ENCODE measurements at regions of chr15 and their contacts with region 1.

Region 1: DNA sequence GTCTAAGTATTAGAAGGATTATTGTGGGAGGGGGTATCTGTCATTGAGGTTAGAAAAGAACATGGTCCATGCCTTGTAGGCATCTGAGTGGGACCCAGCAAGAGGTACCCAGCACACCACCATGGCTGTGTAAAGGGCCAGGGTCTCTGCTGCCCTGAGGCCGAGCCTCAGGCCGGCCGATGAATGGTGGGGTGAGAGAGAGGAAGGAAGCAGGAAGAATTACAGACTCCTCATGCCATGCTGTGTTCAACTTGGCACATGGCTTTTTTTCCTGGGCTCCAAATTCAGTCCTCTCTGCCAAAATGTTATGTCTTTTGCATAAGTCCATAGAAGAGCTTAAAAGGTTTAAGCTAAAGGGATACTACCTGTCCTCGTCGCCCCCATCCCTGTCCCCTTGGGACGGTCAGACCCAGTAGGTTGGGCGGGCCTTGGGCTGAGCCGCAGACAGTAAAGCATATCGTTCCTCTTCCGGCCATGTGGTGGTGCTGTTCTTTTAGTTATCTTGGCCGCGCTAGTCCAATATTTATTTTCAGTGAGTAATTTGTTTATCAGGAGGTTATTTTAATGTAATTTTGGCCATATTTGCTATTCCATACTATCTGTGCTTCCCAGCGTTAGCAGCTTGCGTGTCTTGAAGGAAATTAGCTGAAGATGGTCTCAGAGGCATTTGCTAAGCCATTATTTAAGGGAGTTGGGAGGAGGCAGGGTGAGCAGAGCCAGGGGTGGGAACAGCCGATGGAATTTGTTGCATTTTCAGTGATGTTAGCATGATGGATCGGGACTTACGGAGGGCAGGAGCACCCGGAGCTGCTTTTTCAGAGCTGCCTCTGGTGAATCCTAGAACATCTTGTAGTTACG is 152.4 kb downstream of the AGBL1 start:
- DNase-seq: peak; percentile 67
- ATAC-seq: peak; percentile 78
- H3K4me3 Mint-ChIP-seq: peak overlapping the region; percentile 55
- H3K27ac Mint-ChIP-seq: no peak overlapping the region
- H3K4me1 Mint-ChIP-seq: peaks cover 55% of the 10 kb centered on the region
- H3K27me3 Mint-ChIP-seq: no peaks in the 10 kb centered on the region; the same call in 1 of the 2 replicates
- CTCF ChIP-seq: peak; percentile 53

Region 2: DNA sequence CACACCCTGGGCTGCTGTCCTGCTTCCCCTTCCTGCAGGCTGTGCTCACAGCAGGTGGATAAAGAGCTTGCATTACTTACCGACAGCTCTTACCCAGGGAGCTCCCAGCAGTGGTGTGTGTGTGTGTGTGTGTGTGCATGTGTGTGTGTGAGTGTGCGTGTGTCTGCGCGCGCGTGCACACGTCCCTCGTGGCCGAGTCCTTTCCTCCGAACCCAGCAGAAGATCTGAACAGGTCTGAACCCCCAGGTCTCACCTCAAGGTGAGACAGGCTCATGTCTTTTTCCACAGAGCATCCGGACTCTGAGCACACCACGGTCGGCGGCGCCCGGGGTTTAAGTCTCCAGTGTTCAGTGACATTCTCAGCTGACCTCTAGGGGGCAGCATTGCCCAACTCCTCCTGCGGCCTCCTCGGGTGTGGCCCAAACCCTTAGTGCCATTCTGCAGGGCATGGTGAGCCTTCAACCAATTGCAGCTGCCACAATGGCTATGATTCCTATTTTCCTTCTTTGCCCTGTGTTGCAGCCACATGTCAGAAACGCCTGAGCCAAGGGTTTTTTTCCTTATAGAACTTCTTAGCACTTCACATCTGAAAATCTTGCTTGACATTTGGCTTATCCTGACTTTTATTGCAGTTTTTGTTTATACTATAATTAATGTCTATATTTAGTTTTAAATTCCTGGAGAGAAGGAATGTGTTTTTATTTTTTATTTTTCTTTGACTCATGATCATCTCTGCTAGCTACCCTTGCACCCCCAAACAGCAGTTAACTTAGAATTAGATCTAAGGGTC is 373.3 kb before region 1 on chr15:
- CTCF ChIA-PET with region 1: interaction called, 11 read pairs
- POLR2A ChIA-PET with region 1: no interaction called
- DNase-seq: peak; percentile 85
- ATAC-seq: peak; percentile 90
- H3K4me3 Mint-ChIP-seq: peak overlapping the region; percentile 67
- H3K27ac Mint-ChIP-seq: no peak overlapping the region
- H3K4me1 Mint-ChIP-seq: peaks cover 25% of the 10 kb centered on the region
- H3K27me3 Mint-ChIP-seq: no peaks in the 10 kb centered on the region; the same call in 1 of the 2 replicates
- CTCF ChIP-seq: peak; percentile 84

Region 3: DNA sequence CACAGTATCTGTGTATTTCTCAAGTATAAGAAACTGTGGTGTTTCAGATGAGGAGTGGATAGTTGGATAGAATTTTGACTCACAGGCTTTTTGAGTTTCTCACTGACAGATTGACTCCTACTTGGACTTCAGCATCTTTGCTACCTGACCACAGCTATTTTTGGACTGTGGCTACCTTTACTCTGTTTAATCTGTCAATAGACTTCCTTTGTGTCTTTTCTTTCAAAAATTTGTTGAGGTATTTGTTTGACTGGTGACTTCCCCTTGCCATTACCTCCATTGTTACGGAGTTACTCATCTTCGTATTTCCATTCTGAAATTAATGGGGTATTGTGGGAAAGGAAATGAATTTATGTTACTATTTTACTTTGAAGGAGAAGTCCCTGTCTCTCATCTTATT is 28.6 kb before region 1 on chr15:
- CTCF ChIA-PET with region 1: no interaction called
- POLR2A ChIA-PET with region 1: no interaction called
- DNase-seq: no peak
- ATAC-seq: no peak
- H3K4me3 Mint-ChIP-seq: no peak overlapping the region
- H3K27ac Mint-ChIP-seq: no peak overlapping the region
- H3K4me1 Mint-ChIP-seq: peaks cover 44% of the 10 kb centered on the region
- H3K27me3 Mint-ChIP-seq: no peaks in the 10 kb centered on the region
- CTCF ChIP-seq: no peak

Region 4: DNA sequence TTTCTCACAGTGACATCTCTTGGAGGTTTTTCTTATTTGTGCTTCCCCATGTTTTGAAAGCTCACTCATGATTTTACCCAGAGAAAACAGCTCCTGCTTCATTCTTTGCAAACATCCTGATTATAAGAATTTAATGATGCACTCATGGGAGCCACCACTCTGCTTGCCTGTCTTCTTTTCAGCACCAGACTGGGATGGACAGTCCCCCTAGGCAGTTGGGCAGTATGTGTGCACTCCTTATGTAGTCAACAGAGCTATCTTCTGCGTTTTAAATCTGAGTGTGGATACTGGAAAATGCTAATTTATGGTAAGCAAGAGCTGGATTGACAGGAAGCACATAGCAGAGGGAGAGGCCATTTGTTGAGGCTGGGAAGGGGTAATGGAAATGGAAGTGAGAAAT is 123.7 kb after region 1 on chr15:
- CTCF ChIA-PET with region 1: no interaction called
- POLR2A ChIA-PET with region 1: no interaction called
- DNase-seq: no peak
- ATAC-seq: peak; percentile 34; the same call in 1 of the 2 replicates
- H3K4me3 Mint-ChIP-seq: no peak overlapping the region
- H3K27ac Mint-ChIP-seq: no peak overlapping the region
- H3K4me1 Mint-ChIP-seq: no peaks in the 10 kb centered on the region
- H3K27me3 Mint-ChIP-seq: no peaks in the 10 kb centered on the region
- CTCF ChIP-seq: no peak

Region 5: DNA sequence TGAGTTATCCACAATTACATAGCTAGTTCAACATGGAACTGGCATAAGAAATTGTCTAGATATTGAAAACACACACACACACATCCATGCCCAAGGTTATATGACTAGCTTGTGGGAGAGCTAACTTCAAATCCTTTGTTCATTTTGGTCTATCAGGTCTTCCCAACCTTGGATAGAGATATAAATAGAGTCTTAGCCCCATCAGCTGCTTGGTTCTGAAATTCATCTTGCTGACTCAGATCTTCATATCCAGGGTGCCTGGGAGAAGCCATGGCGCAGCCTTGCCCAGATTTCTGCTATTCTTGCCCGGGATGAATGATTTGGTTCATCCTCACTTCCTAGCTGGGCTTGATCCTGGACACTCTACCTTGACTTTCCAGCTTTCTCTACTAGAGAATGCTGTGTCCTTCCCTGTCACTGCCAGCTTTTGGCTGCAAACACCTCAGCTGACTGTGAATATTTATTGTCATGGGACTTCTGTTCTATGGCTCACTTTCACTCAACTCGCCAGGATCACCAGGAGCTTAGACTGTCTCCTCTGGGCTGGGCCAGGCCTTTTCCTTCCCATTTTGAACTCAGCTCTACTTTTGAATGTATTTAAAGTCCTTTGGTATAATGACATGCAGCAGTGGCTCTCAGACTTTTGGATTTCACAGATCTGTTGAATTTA is 172.0 kb after region 1 on chr15:
- CTCF ChIA-PET with region 1: no interaction called
- POLR2A ChIA-PET with region 1: no interaction called
- DNase-seq: no peak
- ATAC-seq: no peak
- H3K4me3 Mint-ChIP-seq: no peak overlapping the region
- H3K27ac Mint-ChIP-seq: no peak overlapping the region
- H3K4me1 Mint-ChIP-seq: peaks cover 28% of the 10 kb centered on the region
- H3K27me3 Mint-ChIP-seq: no peaks in the 10 kb centered on the region
- CTCF ChIP-seq: no peak

Measured in WTC11 (cell line).